MCF 10A (cell line): ENCODE measurements at regions of chr11 and their contacts with region 1.

Region 1: DNA sequence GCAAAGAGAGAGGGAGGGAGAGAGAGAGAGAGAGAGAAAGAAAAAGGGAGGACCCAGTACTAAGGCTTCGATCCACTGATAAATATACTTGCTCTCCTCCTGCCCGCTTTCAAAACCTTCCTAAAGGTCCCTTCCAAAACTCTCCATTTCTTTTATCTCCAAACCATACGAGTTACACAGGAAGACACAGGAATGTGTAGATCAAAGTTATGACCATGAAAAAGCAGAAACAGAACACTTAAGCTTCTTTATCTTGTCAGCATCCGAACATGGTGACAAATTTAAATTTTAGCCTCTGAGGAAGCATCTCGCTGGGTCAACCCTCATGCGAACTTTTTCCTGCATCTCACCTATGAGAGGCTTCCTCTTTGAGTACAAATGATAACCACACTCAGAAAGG is 29.2 kb upstream of the POGLUT3 start:
- DNase-seq: no peak
- H3K4me3 Mint-ChIP-seq: no peak overlapping the region
- H3K27ac Mint-ChIP-seq: no peak overlapping the region
- H3K4me1 Mint-ChIP-seq: no peaks in the 10 kb centered on the region
- H3K27me3 Mint-ChIP-seq: no peaks in the 10 kb centered on the region
- CTCF ChIP-seq: no peak

Region 2: DNA sequence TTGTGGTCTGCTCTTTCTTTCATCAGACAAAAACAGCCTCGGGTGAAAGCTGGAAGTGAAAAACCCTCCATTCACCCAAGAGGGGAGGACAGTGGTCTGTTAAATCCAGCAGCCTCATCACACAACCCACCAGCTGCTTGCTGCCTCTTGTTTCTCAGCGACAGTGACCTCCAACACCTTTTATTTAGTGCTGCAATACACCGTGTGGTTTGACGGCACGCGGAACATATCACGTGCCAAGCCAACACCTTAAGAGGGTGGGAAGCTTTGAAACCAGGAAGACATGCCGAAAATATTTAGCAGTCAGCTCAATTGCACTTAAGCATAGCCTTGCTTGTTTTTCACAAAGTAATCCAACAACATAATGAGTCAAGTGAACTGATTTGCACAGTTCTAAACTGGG is 10.6 kb after region 1 on chr11:
- CTCF ChIA-PET with region 1: no interaction called
- POLR2A ChIA-PET with region 1: interaction called, 10 read pairs
- intact Hi-C with region 1: no loop called
- DNase-seq: no peak
- H3K4me3 Mint-ChIP-seq: no peak overlapping the region
- H3K27ac Mint-ChIP-seq: no peak overlapping the region
- H3K4me1 Mint-ChIP-seq: no peaks in the 10 kb centered on the region
- H3K27me3 Mint-ChIP-seq: no peaks in the 10 kb centered on the region
- CTCF ChIP-seq: no peak